Left ventricle myocardium inferior (tissue), 1 donor: ENCODE measurements at regions of chr14 and their contacts with region 1.

Region 1: GRCh38 chr14:103546652-103547454 is 15.6 kb downstream of the BAG5 start:
- DNase-seq: peak; percentile 72
- H3K4me3 ChIP-seq: no peak overlapping the region
- H3K27ac ChIP-seq: no peak overlapping the region
- H3K4me1 ChIP-seq: peaks cover 73% of the 10 kb centered on the region
- H3K27me3 ChIP-seq: no peaks in the 10 kb centered on the region
- CTCF ChIP-seq: peak; percentile 93

Region 2: GRCh38 chr14:103499706-103500105 is 47.1 kb before region 1 on chr14:
- intact Hi-C with region 1: loop called (anchors 5 kb)
- DNase-seq: no peak
- H3K4me3 ChIP-seq: no peak overlapping the region
- H3K27ac ChIP-seq: peak overlapping the region; percentile 2
- H3K4me1 ChIP-seq: peaks cover 48% of the 10 kb centered on the region
- H3K27me3 ChIP-seq: no peaks in the 10 kb centered on the region
- CTCF ChIP-seq: no peak

Region 3: GRCh38 chr14:103518422-103519042 is 28.3 kb before region 1 on chr14:
- intact Hi-C with region 1: loop called (anchors 2 kb)
- DNase-seq: peak; percentile 66
- H3K4me3 ChIP-seq: no peak overlapping the region
- H3K27ac ChIP-seq: peak overlapping the region; percentile 89
- H3K4me1 ChIP-seq: peaks cover 88% of the 10 kb centered on the region
- H3K27me3 ChIP-seq: no peaks in the 10 kb centered on the region
- CTCF ChIP-seq: peak; percentile 95